Activated CD4-positive, alpha-beta T cell treated with anti-CD3 and anti-CD28 coated beads, Interleukin-2, amount 10 ng/mL, durations not matched to agents 24 days and 14 days (primary cell): ENCODE measurements at regions of chr1 and their contacts with region 1.

Region 1: DNA sequence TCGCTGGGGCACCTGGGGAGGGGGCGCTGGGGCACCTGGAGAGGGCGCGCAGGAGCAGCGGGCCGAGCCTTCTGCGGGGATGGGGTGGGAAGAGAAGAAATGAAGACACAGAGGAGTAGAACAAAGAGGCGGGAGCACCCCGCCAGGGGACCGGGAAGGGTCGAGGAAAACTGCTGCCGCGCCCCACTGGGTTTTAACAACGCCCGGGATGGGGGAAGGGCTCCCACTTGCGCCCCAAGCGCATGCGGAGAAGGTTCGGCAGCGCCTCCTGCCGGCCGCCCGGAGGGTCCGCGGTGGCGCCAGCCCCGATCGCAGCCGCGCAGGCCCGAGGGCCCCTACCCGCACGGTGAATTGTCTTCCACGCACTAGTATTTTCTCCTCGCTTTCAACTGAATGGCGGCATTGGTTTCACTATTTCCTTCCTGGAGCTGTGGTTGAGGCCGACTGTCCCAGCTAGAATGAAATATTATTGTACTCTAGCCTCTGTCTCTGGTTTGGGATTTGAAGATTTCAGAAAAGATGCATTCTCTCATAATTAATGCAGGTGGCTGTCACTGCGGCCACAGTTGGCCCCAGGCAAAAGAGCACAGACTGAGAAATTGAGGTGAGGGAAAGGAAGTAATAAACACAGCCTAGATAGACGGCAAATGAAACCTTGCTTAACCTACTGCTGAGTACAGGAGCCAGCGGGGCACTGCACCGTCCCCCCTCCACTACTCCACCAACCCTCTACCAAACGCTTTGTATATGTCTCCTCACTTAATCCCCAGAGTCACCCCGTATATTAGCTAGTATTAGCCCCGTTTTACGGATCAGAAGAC is 57.3 kb downstream of the MAB21L3 start:
- DNase-seq: peak; percentile 95
- H3K4me3 Mint-ChIP-seq: peak overlapping the region; percentile 85
- H3K27ac Mint-ChIP-seq: peak overlapping the region; percentile 76
- H3K4me1 Mint-ChIP-seq: peaks cover 9% of the 10 kb centered on the region
- H3K27me3 Mint-ChIP-seq: peaks cover 25% of the 10 kb centered on the region

Region 2: GRCh38 chr1:116151739-116152576 is 16.5 kb before region 1 on chr1:
- intact Hi-C with region 1: loop called (anchors 1 kb)
- DNase-seq: peak; percentile 94
- H3K4me3 Mint-ChIP-seq: peak overlapping the region; percentile 77
- H3K27ac Mint-ChIP-seq: peak overlapping the region; percentile 74
- H3K4me1 Mint-ChIP-seq: peaks cover 13% of the 10 kb centered on the region
- H3K27me3 Mint-ChIP-seq: peaks cover 33% of the 10 kb centered on the region